Activated CD4-positive, alpha-beta T cell treated with anti-CD3 and anti-CD28 coated beads for 36 hours (primary cell): ENCODE measurements at regions of chr14 and their contacts with region 1.

Region 1: DNA sequence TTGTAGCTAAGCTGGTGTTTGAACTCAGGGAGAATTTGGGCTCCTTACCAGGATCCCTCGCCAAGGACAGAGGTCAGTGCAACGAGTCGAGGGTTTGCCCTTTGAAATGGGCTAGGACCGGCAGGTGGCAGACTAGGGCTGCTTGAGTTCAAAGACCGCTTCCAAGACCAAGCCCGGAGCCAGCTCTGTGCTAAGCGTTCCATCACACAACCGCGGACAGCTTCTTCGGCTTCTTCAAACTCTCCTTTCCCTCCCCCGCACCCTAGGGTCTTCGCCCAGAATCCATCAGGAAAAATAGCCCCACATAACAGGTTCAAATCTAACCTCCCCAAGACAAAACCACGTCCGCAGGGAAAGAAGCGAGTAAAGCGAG is 705 bp upstream of the FLVCR2 start:
- DNase-seq: peak; percentile 89
- ATAC-seq: peak; percentile 90
- H3K4me3 Mint-ChIP-seq: peak overlapping the region; percentile 74
- H3K27ac Mint-ChIP-seq: peak overlapping the region; percentile 74
- H3K4me1 Mint-ChIP-seq: peaks cover 22% of the 10 kb centered on the region
- H3K27me3 Mint-ChIP-seq: no peaks in the 10 kb centered on the region

Region 2: GRCh38 chr14:74893614-74894091 is 684.1 kb before region 1 on chr14:
- CTCF ChIA-PET with region 1: no interaction called
- POLR2A ChIA-PET with region 1: no interaction called
- intact Hi-C with region 1: no loop called
- DNase-seq: no peak
- ATAC-seq: no peak
- H3K4me3 Mint-ChIP-seq: no peak overlapping the region
- H3K27ac Mint-ChIP-seq: peak overlapping the region; percentile 12
- H3K4me1 Mint-ChIP-seq: no peaks in the 10 kb centered on the region
- H3K27me3 Mint-ChIP-seq: no peaks in the 10 kb centered on the region

Region 3: GRCh38 chr14:75542588-75543091 is 35.1 kb before region 1 on chr14:
- CTCF ChIA-PET with region 1: interaction called, 10 read pairs
- POLR2A ChIA-PET with region 1: interaction called, 7 read pairs
- intact Hi-C with region 1: no loop called
- DNase-seq: peak; percentile 95
- ATAC-seq: peak; percentile 86
- H3K4me3 Mint-ChIP-seq: peak overlapping the region; percentile 59
- H3K27ac Mint-ChIP-seq: peak overlapping the region; percentile 98
- H3K4me1 Mint-ChIP-seq: peaks cover 85% of the 10 kb centered on the region
- H3K27me3 Mint-ChIP-seq: no peaks in the 10 kb centered on the region

Region 4: GRCh38 chr14:75566321-75566720 is 11.4 kb before region 1 on chr14:
- CTCF ChIA-PET with region 1: interaction called, 29 read pairs
- POLR2A ChIA-PET with region 1: interaction called, 7 read pairs
- intact Hi-C with region 1: no loop called
- DNase-seq: peak; percentile 94
- ATAC-seq: peak; percentile 82
- H3K4me3 Mint-ChIP-seq: peak overlapping the region; percentile 72
- H3K27ac Mint-ChIP-seq: peak overlapping the region; percentile 98
- H3K4me1 Mint-ChIP-seq: peaks cover 86% of the 10 kb centered on the region
- H3K27me3 Mint-ChIP-seq: no peaks in the 10 kb centered on the region

Region 5: GRCh38 chr14:75654127-75654732 is 76.5 kb after region 1 on chr14:
- CTCF ChIA-PET with region 1: interaction called, 104 read pairs
- POLR2A ChIA-PET with region 1: no interaction called
- intact Hi-C with region 1: loop called (anchors 1 kb)
- DNase-seq: peak; percentile 91
- ATAC-seq: peak; percentile 94
- H3K4me3 Mint-ChIP-seq: no peak overlapping the region
- H3K27ac Mint-ChIP-seq: no peak overlapping the region
- H3K4me1 Mint-ChIP-seq: peaks cover 11% of the 10 kb centered on the region
- H3K27me3 Mint-ChIP-seq: no peaks in the 10 kb centered on the region

Region 6: DNA sequence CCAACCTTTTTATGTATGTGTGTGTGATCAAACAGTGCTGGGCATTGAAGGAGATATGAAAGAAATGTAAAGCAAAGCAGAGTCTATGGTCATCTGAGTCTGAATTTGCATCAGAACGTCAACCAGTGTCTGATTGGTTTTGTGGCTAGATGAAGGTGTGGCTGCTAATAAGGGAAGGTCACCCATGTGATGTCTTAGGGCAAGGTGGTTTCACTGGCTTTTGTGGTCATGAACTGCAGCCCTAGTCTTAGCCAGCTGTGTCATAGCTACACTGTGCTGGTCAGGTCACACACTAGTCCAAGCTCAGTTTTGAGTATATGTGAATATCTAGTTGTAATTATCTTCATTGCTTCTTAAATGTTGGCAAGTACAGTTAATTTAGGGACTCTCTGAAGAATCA is 298.2 kb after region 1 on chr14:
- CTCF ChIA-PET with region 1: no interaction called
- POLR2A ChIA-PET with region 1: no interaction called
- intact Hi-C with region 1: loop called in 1 of 2 experiments (anchors 10 kb)
- DNase-seq: no peak
- ATAC-seq: no peak
- H3K4me3 Mint-ChIP-seq: no peak overlapping the region
- H3K27ac Mint-ChIP-seq: no peak overlapping the region
- H3K4me1 Mint-ChIP-seq: peaks cover 18% of the 10 kb centered on the region
- H3K27me3 Mint-ChIP-seq: no peaks in the 10 kb centered on the region

Region 7: DNA sequence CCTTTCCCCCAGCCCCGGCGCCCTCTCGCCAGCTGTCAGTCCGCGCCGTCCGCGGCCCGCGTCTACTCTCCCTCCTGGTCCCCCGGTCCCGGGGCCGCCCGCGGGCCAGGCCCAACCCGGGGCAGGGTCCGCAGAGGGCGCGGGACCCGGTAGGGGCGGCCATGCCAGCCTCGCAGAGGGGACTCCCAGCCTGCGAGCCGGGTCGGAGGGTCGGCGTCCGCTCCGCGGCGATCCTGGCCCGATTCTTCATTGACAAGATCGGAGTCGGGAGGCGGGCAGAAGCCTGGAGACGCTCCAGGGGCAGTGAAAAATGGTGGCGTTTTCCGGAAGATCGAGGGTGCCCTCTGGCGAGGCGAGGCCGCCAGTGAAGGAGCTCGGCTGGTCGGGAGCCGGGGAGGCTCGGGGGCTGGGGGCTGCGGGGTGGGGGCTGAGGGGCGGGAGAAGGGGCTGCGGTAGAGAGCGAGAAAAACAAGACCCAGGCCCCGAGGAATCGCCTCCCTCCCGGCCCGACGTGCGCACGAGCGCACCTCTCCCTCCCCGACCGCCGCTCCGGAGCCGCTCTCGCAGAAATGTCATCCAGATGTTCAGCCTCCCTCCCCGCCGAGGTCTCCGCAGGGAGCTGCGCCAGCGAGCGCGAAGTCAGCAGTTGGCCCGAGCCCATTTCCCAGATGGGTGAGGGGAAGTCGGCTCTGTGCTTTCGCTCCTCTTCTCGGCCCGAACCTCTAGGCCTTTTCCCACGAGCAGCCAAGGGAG is 404.7 kb after region 1 on chr14:
- CTCF ChIA-PET with region 1: interaction called, 3 read pairs
- POLR2A ChIA-PET with region 1: no interaction called
- intact Hi-C with region 1: loop called (anchors 1 to 2 kb)
- DNase-seq: peak; percentile 86
- ATAC-seq: peak; percentile 62
- H3K4me3 Mint-ChIP-seq: peak overlapping the region; percentile 67
- H3K27ac Mint-ChIP-seq: peak overlapping the region; percentile 78
- H3K4me1 Mint-ChIP-seq: peaks cover 42% of the 10 kb centered on the region
- H3K27me3 Mint-ChIP-seq: no peaks in the 10 kb centered on the region